Activated CD4-positive, alpha-beta T cell treated with anti-CD3 and anti-CD28 coated beads for 36 hours (primary cell): ENCODE measurements at regions of chr17 and their contacts with region 1.

Region 1: GRCh38 chr17:68759343-68760132 is 158.4 kb upstream of the FAM20A start:
- DNase-seq: peak; percentile 80
- ATAC-seq: peak; percentile 96
- H3K4me3 Mint-ChIP-seq: peak overlapping the region; percentile 38
- H3K27ac Mint-ChIP-seq: no peak overlapping the region
- H3K4me1 Mint-ChIP-seq: peaks cover 12% of the 10 kb centered on the region
- H3K27me3 Mint-ChIP-seq: peaks cover 2% of the 10 kb centered on the region

Region 2: DNA sequence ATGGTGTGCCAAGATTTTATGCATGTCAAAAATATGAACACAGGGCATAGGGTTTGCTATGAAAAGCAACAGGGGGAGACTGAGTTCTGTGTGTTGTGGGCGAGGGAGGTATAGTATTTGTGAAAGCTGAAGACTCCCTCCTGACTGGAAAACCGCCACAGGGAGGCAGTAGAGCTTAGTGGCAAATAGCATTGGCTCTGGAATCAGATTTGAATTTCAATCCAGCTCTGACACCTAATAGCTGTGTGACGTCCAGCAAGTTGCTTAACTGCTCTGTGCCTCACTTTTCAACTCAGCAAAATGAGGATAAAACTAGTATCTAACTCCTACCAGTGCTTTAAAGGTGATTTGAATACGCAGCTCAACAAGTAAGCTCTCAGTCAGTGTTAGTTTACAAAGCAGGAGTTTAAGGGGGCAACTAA is 702.0 kb before region 1 on chr17:
- CTCF ChIA-PET with region 1: no interaction called
- POLR2A ChIA-PET with region 1: no interaction called
- intact Hi-C with region 1: loop called in 1 of 2 experiments (anchors 5 kb)
- DNase-seq: peak; percentile 62
- ATAC-seq: peak; percentile 88
- H3K4me3 Mint-ChIP-seq: no peak overlapping the region
- H3K27ac Mint-ChIP-seq: no peak overlapping the region
- H3K4me1 Mint-ChIP-seq: no peaks in the 10 kb centered on the region
- H3K27me3 Mint-ChIP-seq: no peaks in the 10 kb centered on the region

Region 3: GRCh38 chr17:68161644-68162428 is 597.7 kb before region 1 on chr17:
- CTCF ChIA-PET with region 1: no interaction called
- POLR2A ChIA-PET with region 1: no interaction called
- intact Hi-C with region 1: loop called in 1 of 2 experiments (anchors 10 kb)
- DNase-seq: no peak
- ATAC-seq: no peak
- H3K4me3 Mint-ChIP-seq: no peak overlapping the region
- H3K27ac Mint-ChIP-seq: no peak overlapping the region
- H3K4me1 Mint-ChIP-seq: peaks cover 3% of the 10 kb centered on the region
- H3K27me3 Mint-ChIP-seq: no peaks in the 10 kb centered on the region

Region 4: DNA sequence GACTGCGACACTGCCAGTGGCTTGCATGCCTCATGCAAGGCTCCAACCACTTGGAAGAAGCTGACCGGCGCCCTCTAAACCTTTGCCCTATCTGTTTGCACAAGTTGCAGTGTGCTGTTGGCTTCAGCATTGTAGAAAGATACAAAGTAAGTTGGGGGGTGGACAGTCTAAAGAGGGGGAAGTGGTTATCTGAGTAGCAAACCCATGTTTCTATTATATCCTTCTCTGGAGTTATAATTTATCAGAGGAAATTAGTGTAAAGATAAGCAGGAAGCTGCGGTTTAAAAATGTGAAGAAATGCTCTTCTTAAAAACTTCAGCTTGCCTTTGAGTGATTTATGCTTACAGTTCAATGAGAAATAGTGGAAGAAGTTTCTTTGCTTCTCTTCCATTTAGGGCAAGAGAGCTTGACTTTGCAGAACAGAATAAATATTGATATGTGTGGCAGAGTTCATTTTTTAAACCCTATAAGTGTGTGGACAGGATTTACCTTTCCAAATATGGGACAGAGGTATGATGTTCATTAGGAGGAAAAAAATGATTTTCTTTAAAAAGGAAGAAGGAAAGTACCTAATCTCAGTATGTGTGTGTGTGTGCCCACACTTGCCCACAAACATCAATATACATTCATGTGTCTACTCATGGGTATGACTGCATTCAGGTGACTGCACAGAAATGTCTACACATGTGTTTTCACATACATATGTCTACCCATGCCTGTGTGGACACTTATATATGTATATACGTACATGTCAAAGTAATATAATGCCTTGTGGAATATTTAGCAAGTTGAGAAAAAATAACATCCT is 503.6 kb before region 1 on chr17:
- CTCF ChIA-PET with region 1: no interaction called
- POLR2A ChIA-PET with region 1: no interaction called
- intact Hi-C with region 1: loop called in 1 of 2 experiments (anchors 5 kb)
- DNase-seq: peak; percentile 54
- ATAC-seq: peak; percentile 75
- H3K4me3 Mint-ChIP-seq: no peak overlapping the region
- H3K27ac Mint-ChIP-seq: peak overlapping the region; percentile 65
- H3K4me1 Mint-ChIP-seq: peaks cover 78% of the 10 kb centered on the region
- H3K27me3 Mint-ChIP-seq: no peaks in the 10 kb centered on the region

Region 5: DNA sequence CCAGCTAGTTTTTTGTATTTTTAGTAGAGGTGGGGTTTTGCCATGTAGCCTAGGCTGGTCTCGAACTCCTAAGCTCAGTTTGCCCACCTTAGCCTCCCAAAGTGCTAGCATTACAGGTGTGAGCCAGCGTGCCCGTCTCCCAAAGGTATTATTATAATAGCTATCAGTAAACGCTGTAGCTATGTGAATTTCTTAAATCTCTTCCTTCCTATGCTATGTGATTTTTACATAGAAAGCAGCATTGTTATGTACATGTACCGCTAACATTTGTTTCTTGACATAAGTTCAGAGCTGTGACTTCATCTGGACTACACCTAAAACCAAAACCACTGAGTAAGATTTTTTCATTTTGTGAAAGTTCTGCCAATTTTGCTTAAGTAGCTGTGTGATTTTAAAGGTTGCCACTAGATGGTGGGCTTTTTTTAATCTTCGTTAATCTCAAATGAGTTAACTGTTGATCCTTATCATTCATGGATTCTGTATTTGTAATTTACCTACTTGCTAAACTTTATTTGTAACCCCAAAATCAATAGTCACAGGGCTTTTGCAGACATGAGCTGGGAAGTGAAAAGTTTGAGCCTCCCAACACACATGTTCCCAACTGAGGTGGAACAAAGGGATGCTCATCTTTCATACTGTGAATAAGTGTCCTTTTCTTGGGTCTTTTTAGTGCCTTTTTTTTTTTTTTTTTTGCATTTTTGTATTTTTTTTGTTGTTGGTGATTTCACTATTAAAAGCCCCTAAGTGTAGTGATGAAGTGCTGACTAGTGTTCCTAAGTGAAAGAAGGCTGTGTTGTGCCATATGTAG is 225.4 kb before region 1 on chr17:
- CTCF ChIA-PET with region 1: interaction called, 4 read pairs
- POLR2A ChIA-PET with region 1: no interaction called
- intact Hi-C with region 1: loop called in 1 of 2 experiments (anchors 1 kb)
- DNase-seq: no peak
- ATAC-seq: peak; percentile 69
- H3K4me3 Mint-ChIP-seq: no peak overlapping the region
- H3K27ac Mint-ChIP-seq: peak overlapping the region; percentile 20
- H3K4me1 Mint-ChIP-seq: peaks cover 9% of the 10 kb centered on the region
- H3K27me3 Mint-ChIP-seq: no peaks in the 10 kb centered on the region

Region 6: DNA sequence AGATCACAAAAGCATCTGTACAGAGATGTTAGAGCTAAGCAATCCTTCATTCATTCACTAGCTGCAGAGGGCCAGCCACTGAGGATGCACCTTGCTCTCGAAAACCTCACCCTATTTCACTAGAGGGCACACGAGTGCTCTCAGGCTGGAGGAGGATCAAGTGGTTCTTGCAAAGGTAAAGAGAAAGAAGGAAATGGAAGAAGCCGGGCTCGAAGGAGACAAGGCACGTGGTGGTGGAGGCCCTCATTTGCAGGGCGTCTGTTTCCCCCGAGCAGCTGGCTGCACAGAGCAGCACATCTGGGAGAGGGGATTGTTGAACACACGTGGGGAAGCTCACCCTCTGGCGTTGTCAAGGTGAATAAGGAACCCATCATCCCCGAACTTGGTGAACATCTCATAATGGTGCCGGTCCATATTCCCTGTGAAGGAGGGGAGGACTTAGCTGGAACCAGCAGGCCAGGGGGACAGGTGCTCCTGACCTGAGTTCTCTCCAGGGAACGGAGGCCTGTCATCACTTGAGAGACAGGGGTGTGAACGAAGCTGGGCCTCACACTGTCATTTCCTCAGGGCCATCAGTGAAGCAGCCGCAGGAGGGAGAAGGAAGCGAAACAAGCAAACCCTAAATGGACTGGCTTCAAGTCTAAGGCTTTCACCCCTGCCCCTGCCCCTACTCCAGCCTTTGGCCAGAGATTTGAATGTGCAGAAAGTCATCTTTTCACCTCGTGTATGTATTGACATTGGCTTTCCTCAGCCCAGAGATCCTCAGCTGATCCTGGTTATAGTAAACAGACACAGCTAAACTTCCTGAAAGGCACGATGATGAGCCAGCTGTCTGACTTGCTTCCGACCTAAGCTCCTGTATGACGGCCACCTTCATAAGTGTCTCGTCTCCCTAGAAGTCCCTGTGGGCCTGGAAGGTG is 219.7 kb before region 1 on chr17:
- CTCF ChIA-PET with region 1: interaction called, 4 read pairs
- POLR2A ChIA-PET with region 1: no interaction called
- intact Hi-C with region 1: loop called in 1 of 2 experiments (anchors 10 kb)
- DNase-seq: no peak
- ATAC-seq: no peak
- H3K4me3 Mint-ChIP-seq: no peak overlapping the region
- H3K27ac Mint-ChIP-seq: no peak overlapping the region
- H3K4me1 Mint-ChIP-seq: peaks cover 2% of the 10 kb centered on the region
- H3K27me3 Mint-ChIP-seq: no peaks in the 10 kb centered on the region

Region 7: DNA sequence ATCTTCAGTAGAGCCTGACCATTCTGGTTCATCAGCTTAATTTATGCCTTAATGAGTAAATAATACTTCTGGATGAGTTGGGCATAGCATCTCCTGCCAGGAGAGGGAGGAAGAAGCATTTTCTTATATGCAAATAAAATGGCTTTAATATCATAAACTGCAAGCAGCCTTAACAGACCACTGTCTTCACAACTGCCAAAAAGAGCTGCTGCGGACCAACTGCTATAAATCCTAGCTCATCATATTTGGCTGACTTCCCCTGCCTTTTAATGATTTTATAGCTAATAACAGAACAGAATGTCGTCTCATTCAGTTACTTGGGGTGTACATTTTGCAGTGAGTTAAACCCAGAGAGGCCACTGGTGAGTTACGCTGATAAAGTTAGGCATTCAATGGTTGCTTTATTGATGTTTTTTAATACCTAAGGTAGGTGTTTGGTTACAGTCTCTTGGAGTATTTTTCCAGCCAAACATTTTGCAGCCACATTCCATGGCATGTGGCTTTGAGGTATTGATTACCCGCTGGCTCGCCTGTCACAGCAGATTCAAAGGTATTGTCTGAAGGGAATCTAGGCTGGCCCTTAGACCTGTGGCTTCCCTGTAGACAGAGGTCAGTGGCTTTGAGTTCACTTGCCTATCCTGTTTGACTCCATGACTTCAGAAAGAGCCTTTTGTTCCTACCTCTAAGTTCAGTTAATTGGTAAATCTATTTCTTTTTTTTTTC is 174.8 kb before region 1 on chr17:
- CTCF ChIA-PET with region 1: no interaction called
- POLR2A ChIA-PET with region 1: no interaction called
- intact Hi-C with region 1: no loop called
- DNase-seq: no peak
- ATAC-seq: no peak
- H3K4me3 Mint-ChIP-seq: no peak overlapping the region
- H3K27ac Mint-ChIP-seq: no peak overlapping the region
- H3K4me1 Mint-ChIP-seq: no peaks in the 10 kb centered on the region
- H3K27me3 Mint-ChIP-seq: peaks cover 4% of the 10 kb centered on the region

Region 8: GRCh38 chr17:68600931-68601564 is 158.5 kb before region 1 on chr17 and contains the start of gene FAM20A:
- CTCF ChIA-PET with region 1: no interaction called
- POLR2A ChIA-PET with region 1: no interaction called
- intact Hi-C with region 1: no loop called
- DNase-seq: peak; percentile 34
- ATAC-seq: peak; percentile 33
- H3K4me3 Mint-ChIP-seq: no peak within 1 kb of the TSS
- H3K27ac Mint-ChIP-seq: no peak within 1 kb of the TSS
- H3K4me1 Mint-ChIP-seq: peaks cover 8% of the 10 kb centered on the region
- H3K27me3 Mint-ChIP-seq: peaks cover 58% of the 10 kb centered on the region
- total RNA-seq, gene FAM20A: not detected

Region 9: GRCh38 chr17:68684949-68685357 is 74.6 kb before region 1 on chr17:
- CTCF ChIA-PET with region 1: no interaction called
- POLR2A ChIA-PET with region 1: no interaction called
- intact Hi-C with region 1: no loop called
- DNase-seq: no peak
- ATAC-seq: no peak
- H3K4me3 Mint-ChIP-seq: no peak overlapping the region
- H3K27ac Mint-ChIP-seq: no peak overlapping the region
- H3K4me1 Mint-ChIP-seq: no peaks in the 10 kb centered on the region
- H3K27me3 Mint-ChIP-seq: peaks cover 5% of the 10 kb centered on the region